GM13976 (cell line): ENCODE measurements at regions of chr12 and their contacts with region 1.

Region 1: GRCh38 chr12:9615420-9616136 is 7.9 kb upstream of the KLRB1 start:
- DNase-seq: no peak
- CTCF ChIP-seq: no peak

Region 2: GRCh38 chr12:9464408-9464807 is 151.2 kb before region 1 on chr12:
- in situ Hi-C with region 1: loop called (anchors 25 kb)
- DNase-seq: no peak
- CTCF ChIP-seq: no peak

Region 3: DNA sequence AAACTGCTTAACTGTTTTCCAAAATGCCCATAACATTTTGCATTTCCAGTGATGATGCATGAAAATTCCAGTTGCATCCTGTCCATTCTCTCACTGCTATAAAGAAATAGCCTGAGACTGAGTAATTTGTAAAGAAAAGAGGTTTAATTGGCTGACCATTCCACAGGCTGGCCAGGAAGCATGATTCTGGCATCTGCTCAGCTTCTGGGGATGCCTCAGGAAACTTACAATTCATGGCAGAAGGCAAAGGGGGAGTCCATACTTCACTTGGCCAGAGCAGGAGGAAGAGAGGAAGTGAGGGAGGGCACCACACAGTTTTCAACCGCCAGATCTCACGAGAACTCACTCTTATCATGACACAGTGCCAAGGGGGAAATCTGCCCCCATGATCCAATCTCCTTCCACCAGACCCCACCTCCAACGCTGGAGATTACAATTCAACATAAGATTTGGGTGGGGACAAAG is 35.7 kb after region 1 on chr12:
- in situ Hi-C with region 1: no loop called
- DNase-seq: no peak
- CTCF ChIP-seq: no peak